ENCODE measurements at regions of chr11 and their contacts with region 1.

Region 1: DNA sequence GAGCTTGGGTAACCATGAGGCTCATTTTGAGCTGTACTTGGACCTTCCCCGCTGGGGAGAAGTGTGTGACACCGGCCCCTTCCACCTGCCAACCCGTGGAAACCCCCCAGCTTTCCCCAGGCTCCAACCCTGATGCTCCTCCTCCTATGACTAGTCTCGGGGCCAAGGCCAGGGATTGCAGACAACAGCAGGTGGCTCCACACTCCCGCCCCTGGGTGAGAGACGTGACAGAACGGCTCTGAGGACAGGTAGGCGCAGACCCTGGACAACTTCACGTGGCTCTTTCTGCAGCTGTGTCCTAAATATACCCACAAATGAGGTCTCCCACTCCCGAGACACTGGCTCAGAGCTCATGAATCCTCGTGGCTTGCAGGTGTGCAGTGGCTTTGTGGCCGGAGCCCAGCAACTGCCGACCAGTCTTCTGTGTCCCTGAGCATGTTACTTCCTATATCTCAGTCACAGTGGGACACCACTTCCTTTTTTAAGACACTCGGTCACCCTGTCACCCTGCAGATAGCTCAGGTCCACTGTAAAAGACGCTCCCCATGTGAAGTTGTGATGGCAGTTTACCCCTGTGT is 55.2 kb downstream of the NECTIN1 start:
- DNase-seq: peak in 1 of 3 donors; percentile 57
- ATAC-seq: peak; percentile 56 to 84 (median 68)
- H3K4me3 ChIP-seq: no peak overlapping the region
- H3K27ac ChIP-seq: no peak overlapping the region
- H3K4me1 ChIP-seq: no peaks in the 10 kb centered on the region
- H3K27me3 ChIP-seq: no peaks in the 10 kb centered on the region
- CTCF ChIP-seq: peak; percentile 21 to 51 (median 34)
- POLR2A ChIP-seq: no peak

Region 2: GRCh38 chr11:119584193-119585037 is 89.4 kb before region 1 on chr11:
- intact Hi-C with region 1: no loop called
- DNase-seq: peak in 2 of 3 donors; percentile 39 to 45
- ATAC-seq: peak; percentile 61 to 68 (median 64)
- H3K4me3 ChIP-seq: peak overlapping the region; percentile 23 to 37 (median 25)
- H3K27ac ChIP-seq: no peak overlapping the region
- H3K4me1 ChIP-seq: peaks cover 0 to 13% (median 0%) of the 10 kb centered on the region in 4 donors
- H3K27me3 ChIP-seq: no peaks in the 10 kb centered on the region
- CTCF ChIP-seq: no peak
- POLR2A ChIP-seq: no peak

Region 3: GRCh38 chr11:119728651-119729580 is 55.1 kb after region 1 on chr11 and contains the start of gene NECTIN1:
- intact Hi-C with region 1: loop called in 1 of 2 experiments (anchors 5 kb)
- DNase-seq: peak; percentile 90 to 92 (median 91)
- ATAC-seq: peak; percentile 83 to 91 (median 88)
- H3K4me3 ChIP-seq: peak within 1 kb of the TSS; percentile 66 to 80 (median 80)
- H3K27ac ChIP-seq: peak within 1 kb of the TSS; percentile 45 to 72 (median 71)
- H3K4me1 ChIP-seq: peaks cover 0 to 17% (median 5%) of the 10 kb centered on the region in 4 donors
- H3K27me3 ChIP-seq: no peaks in the 10 kb centered on the region
- CTCF ChIP-seq: peak; percentile 93 to 98 (median 96)
- POLR2A ChIP-seq: peak; percentile 95
- total RNA-seq, gene NECTIN1: 4.3 to 8.4 (median 6.1) TPM

Measured in right lobe of liver (tissue), 6 donors.